ENCODE measurements at regions of chr13 and their contacts with region 1.

Region 1: GRCh38 chr13:98445340-98446233 is 131.3 kb downstream of the STK24 start:
- DNase-seq: peak; percentile 72
- ATAC-seq: peak; percentile 79
- H3K4me3 ChIP-seq: no peak overlapping the region
- H3K27ac ChIP-seq: no peak overlapping the region
- H3K4me1 ChIP-seq: peaks cover 17% of the 10 kb centered on the region
- H3K27me3 ChIP-seq: no peaks in the 10 kb centered on the region
- CTCF ChIP-seq: peak; percentile 80

Region 2: DNA sequence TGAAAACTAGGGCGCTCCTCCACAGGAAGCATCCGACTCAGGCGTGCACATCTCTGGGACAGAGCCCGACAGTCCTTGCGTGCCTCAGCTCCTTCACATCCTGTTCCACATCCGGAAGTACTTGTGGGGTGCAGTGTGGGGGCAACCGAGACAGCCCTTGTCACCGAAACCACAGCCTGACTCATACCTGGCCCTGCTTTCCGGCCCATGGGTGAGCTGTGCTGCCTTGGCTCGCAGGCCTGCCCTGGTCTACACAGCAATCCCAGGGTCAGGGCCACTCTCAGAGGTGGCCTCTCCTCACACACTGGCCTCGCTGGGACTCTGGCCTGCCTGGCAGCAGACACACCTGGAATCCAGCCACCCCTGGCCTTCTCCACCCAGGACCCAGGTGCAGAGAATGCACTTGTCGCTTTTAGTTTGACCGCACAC is 31.0 kb after region 1 on chr13:
- CTCF ChIA-PET with region 1: no interaction called
- POLR2A ChIA-PET with region 1: no interaction called
- intact Hi-C with region 1: no loop called
- DNase-seq: peak; percentile 82
- ATAC-seq: peak; percentile 97
- H3K4me3 ChIP-seq: 0 out of 2 replicates have a peak overlapping the region, but pooled peaks have one; percentile 24
- H3K27ac ChIP-seq: peak overlapping the region; percentile 96
- H3K4me1 ChIP-seq: peaks cover 32% of the 10 kb centered on the region
- H3K27me3 ChIP-seq: no peaks in the 10 kb centered on the region
- CTCF ChIP-seq: no peak

Region 3: GRCh38 chr13:98576963-98577822 is 131.6 kb after region 1 on chr13 and contains the start of gene STK24:
- CTCF ChIA-PET with region 1: no interaction called
- POLR2A ChIA-PET with region 1: no interaction called
- intact Hi-C with region 1: loop called (anchors 10 kb)
- DNase-seq: peak; percentile 69
- ATAC-seq: peak; percentile 62
- H3K4me3 ChIP-seq: peak within 1 kb of the TSS; percentile 99
- H3K27ac ChIP-seq: peak within 1 kb of the TSS; percentile 55
- H3K4me1 ChIP-seq: peaks cover 30% of the 10 kb centered on the region
- H3K27me3 ChIP-seq: no peaks in the 10 kb centered on the region
- CTCF ChIP-seq: no peak
- total RNA-seq, gene STK24: 52.4 and 57.0 TPM in 2 replicates

Measured in PC-3 (cell line).